ENCODE measurements at regions of chr11 and their contacts with region 1.

Region 1: GRCh38 chr11:122628810-122629555 is 26.5 kb upstream of the UBASH3B start:
- DNase-seq: peak; percentile 74 to 75
- ATAC-seq: peak; percentile 93 to 94
- H3K4me3 ChIP-seq: no peak overlapping the region
- H3K27ac ChIP-seq: peak overlapping the region; percentile 65 to 75; a peak in 5 of 6 replicates
- H3K4me1 ChIP-seq: peaks cover 41% of the 10 kb centered on the region
- CTCF ChIP-seq: peak; percentile 67
- EP300 ChIP-seq: no peak
- POLR2A ChIP-seq: no peak
- RAD21 ChIP-seq: peak; percentile 70 to 87

Region 2: GRCh38 chr11:122601141-122602125 is 27.6 kb before region 1 on chr11:
- CTCF ChIA-PET with region 1: interaction called, 11 read pairs
- POLR2A ChIA-PET with region 1: no interaction called
- DNase-seq: peak; percentile 17 to 56
- ATAC-seq: peak; percentile 55 to 77; a peak in 5 of 6 replicates
- H3K4me3 ChIP-seq: no peak overlapping the region
- H3K27ac ChIP-seq: peak overlapping the region; percentile 72 to 85
- H3K4me1 ChIP-seq: peaks cover 50% of the 10 kb centered on the region
- CTCF ChIP-seq: no peak
- EP300 ChIP-seq: no peak; a peak in 1 of 5 replicates
- POLR2A ChIP-seq: no peak
- RAD21 ChIP-seq: no peak

Region 3: GRCh38 chr11:122642472-122642922 is 13.5 kb after region 1 on chr11:
- CTCF ChIA-PET with region 1: interaction called, 10 read pairs
- POLR2A ChIA-PET with region 1: interaction called, 3 read pairs
- DNase-seq: peak; percentile 82 to 95
- ATAC-seq: peak; percentile 95 to 96
- H3K4me3 ChIP-seq: peak overlapping the region; percentile 24
- H3K27ac ChIP-seq: peak overlapping the region; percentile 92 to 97
- H3K4me1 ChIP-seq: peaks cover 49% of the 10 kb centered on the region
- CTCF ChIP-seq: no peak
- EP300 ChIP-seq: peak; percentile 81 to 84
- POLR2A ChIP-seq: no peak
- RAD21 ChIP-seq: peak; percentile 8 to 37; a peak in 1 of 5 replicates

Region 4: DNA sequence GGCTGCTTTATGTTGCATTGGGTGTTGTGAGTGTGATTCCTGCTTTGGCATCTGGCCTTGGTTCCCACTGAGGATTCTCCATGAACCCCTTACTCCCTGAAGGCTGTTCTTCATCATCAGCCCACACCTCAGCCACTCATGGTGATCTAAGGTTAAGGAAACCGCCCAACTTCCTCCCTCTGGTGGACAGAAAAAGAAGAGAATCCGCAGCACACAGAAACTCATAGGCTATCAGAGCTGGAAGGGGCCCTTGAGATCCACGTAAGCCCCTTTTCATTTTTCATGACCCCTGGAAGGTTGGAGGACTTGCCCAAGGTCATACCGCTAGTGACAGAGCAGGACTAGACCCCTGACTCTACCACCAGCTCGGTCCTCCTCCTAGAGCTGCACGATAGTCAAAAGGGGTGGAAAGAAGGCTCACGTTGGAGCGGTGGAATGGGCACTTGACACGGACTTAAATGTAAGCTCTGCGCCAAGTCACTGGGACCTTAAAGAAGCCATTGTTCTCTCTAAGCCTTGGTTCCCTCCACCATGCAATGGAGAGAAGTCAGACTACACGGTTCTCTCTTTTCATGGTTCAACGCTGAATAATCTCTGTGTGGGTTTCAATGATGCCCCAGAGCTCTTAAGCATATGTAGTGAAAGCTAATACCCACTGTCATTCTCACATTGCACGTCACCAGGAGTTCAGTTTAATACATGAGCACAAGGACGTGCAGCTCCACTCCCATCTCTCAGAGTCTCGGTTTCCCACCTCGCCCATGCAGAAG is 125.8 kb after region 1 on chr11:
- CTCF ChIA-PET with region 1: interaction called, 13 read pairs
- POLR2A ChIA-PET with region 1: no interaction called
- DNase-seq: no peak
- ATAC-seq: peak; percentile 56 to 76; a peak in 3 of 6 replicates
- H3K4me3 ChIP-seq: no peak overlapping the region
- H3K27ac ChIP-seq: no peak overlapping the region
- H3K4me1 ChIP-seq: peaks cover 17% of the 10 kb centered on the region; the same call in 1 of the 3 replicates
- CTCF ChIP-seq: no peak; the same call in 1 of the 3 replicates
- EP300 ChIP-seq: no peak
- POLR2A ChIP-seq: no peak
- RAD21 ChIP-seq: peak in 1 of 2 experiments; percentile 27; a peak in 2 of 5 replicates

Region 5: GRCh38 chr11:122788781-122789535 is 160.0 kb after region 1 on chr11:
- CTCF ChIA-PET with region 1: interaction called, 42 read pairs
- POLR2A ChIA-PET with region 1: no interaction called
- DNase-seq: no peak
- ATAC-seq: peak; percentile 59 to 70; a peak in 5 of 6 replicates
- H3K4me3 ChIP-seq: no peak overlapping the region
- H3K27ac ChIP-seq: no peak overlapping the region
- H3K4me1 ChIP-seq: peaks cover 15% of the 10 kb centered on the region
- CTCF ChIP-seq: peak; percentile 30; the same call in 2 of the 3 replicates
- EP300 ChIP-seq: no peak
- POLR2A ChIP-seq: no peak
- RAD21 ChIP-seq: 0 out of 5 replicates have a peak, but pooled peaks of 1 of the 2 experiments have one; percentile 7

Region 6: GRCh38 chr11:122815902-122816301 is 186.9 kb after region 1 on chr11:
- CTCF ChIA-PET with region 1: no interaction called
- POLR2A ChIA-PET with region 1: no interaction called
- DNase-seq: no peak
- ATAC-seq: no peak; a peak in 1 of 6 replicates
- H3K4me3 ChIP-seq: no peak overlapping the region
- H3K27ac ChIP-seq: no peak overlapping the region
- H3K4me1 ChIP-seq: no peaks in the 10 kb centered on the region
- CTCF ChIP-seq: no peak
- EP300 ChIP-seq: no peak
- POLR2A ChIP-seq: no peak
- RAD21 ChIP-seq: no peak

Region 7: GRCh38 chr11:122853971-122854446 is 225.0 kb after region 1 on chr11:
- CTCF ChIA-PET with region 1: interaction called, 212 read pairs
- POLR2A ChIA-PET with region 1: interaction called, 4 read pairs
- DNase-seq: peak; percentile 65 to 82
- ATAC-seq: peak; percentile 24 to 53; a peak in 3 of 6 replicates
- H3K4me3 ChIP-seq: no peak overlapping the region
- H3K27ac ChIP-seq: peak overlapping the region; percentile 93 to 94; a peak in 5 of 6 replicates
- H3K4me1 ChIP-seq: peaks cover 32% of the 10 kb centered on the region
- CTCF ChIP-seq: peak; percentile 83
- EP300 ChIP-seq: no peak
- POLR2A ChIP-seq: no peak
- RAD21 ChIP-seq: peak; percentile 84 to 87